ENCODE measurements at regions of chr9 and their contacts with region 1.

Region 1: GRCh38 chr9:87662808-87663528 is 63.0 kb upstream of the CTSL start:
- DNase-seq: peak in 1 of 2 donors; percentile 46
- ATAC-seq: no peak
- H3K4me3 ChIP-seq: no peak overlapping the region
- H3K4me3 Mint-ChIP-seq: no peak overlapping the region
- H3K27ac ChIP-seq: no peak overlapping the region
- H3K27ac Mint-ChIP-seq: no peak overlapping the region
- H3K4me1 ChIP-seq: no peaks in the 10 kb centered on the region
- H3K4me1 Mint-ChIP-seq: no peaks in the 10 kb centered on the region
- H3K27me3 ChIP-seq: no peaks in the 10 kb centered on the region
- H3K27me3 Mint-ChIP-seq: peaks cover 0 to 9% of the 10 kb centered on the region in 2 donors
- CTCF ChIP-seq: peak; percentile 26

Region 2: DNA sequence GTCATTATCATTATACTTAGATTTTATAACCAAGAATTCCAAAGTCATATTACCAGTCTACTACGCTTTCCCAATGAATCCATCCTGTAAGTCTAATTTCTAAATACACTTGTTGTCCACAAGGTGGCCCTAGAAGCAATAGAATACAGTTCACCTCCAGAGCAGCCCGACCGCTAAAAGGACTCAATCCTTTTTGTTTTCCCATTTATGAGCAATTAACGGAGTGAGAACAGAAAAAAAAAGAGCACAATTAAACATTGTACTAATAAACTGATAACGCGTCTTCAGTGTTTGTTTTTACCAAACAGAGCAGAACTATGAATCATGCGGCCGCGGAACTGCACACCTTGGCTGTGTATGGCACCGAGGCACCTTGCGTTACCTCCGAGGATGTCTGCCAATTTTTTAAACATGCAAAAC is 326.0 kb before region 1 on chr9:
- intact Hi-C with region 1: loop called (anchors 2 kb)
- DNase-seq: peak in 1 of 2 donors; percentile 56
- ATAC-seq: peak in 2 of 3 donors; percentile 57 to 68
- H3K4me3 ChIP-seq: no peak overlapping the region
- H3K4me3 Mint-ChIP-seq: peak overlapping the region; percentile 70
- H3K27ac ChIP-seq: no peak overlapping the region
- H3K27ac Mint-ChIP-seq: no peak overlapping the region
- H3K4me1 ChIP-seq: peaks cover 5% of the 10 kb centered on the region
- H3K4me1 Mint-ChIP-seq: peaks cover 12 to 13% of the 10 kb centered on the region in 2 donors
- H3K27me3 ChIP-seq: peaks cover 11% of the 10 kb centered on the region
- H3K27me3 Mint-ChIP-seq: peaks cover 23 to 46% of the 10 kb centered on the region in 2 donors
- CTCF ChIP-seq: peak; percentile 75